Ascending aorta (tissue), 2 donors: ENCODE measurements at regions of chr3 and their contacts with region 1.

Region 1: GRCh38 chr3:123449102-123449996 is 459 bp upstream of the ADCY5 start:
- DNase-seq: no peak
- H3K4me3 ChIP-seq: peak overlapping the region; percentile 74 to 97
- H3K27ac ChIP-seq: peak overlapping the region; percentile 88 to 96
- H3K4me1 ChIP-seq: peaks cover 0 to 10% of the 10 kb centered on the region in 2 donors
- H3K27me3 ChIP-seq: peaks cover 4% of the 10 kb centered on the region
- CTCF ChIP-seq: no peak

Region 2: DNA sequence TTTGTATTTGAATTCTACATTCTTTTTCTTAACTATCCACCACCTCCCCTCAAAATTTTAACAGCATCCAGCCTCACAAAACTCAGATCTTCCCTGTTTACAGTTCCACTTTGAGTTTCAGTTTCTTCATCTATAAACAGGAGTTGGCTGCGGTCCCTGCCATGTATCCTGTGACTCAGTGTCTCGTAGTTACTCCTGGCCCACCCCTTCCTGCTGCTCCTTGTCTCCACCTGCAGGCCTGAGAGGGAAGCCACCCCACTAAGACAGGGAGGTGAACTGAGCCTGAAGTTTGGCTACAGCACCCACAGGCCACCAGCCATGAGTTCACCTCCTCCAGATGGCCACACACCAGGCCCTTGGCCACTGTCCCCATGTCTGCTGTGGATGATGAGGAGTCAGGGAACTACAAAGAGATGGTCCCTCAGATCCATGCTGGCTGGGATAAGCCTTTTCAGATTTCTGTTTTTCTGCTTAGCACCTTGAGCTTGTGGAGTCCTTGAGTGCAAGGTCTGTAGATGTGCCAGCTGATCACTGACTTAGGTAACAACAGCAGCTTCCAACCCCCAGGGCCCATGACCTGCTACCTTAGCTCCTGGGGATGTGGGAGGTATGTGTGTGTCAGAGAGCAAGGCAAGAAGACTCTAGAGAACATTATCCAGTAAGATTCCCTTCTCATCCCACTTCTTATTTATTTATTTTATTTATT is 1356.7 kb before region 1 on chr3:
- intact Hi-C with region 1: no loop called
- DNase-seq: no peak
- H3K4me3 ChIP-seq: no peak overlapping the region
- H3K27ac ChIP-seq: no peak overlapping the region
- H3K4me1 ChIP-seq: no peaks in the 10 kb centered on the region
- H3K27me3 ChIP-seq: no peaks in the 10 kb centered on the region
- CTCF ChIP-seq: peak in 1 of 3 experiments; percentile 23

Region 3: GRCh38 chr3:123328851-123329635 is 120.3 kb before region 1 on chr3:
- intact Hi-C with region 1: loop called (anchors 1 kb)
- DNase-seq: peak in 1 of 2 donors; percentile 88
- H3K4me3 ChIP-seq: no peak overlapping the region
- H3K27ac ChIP-seq: peak overlapping the region; percentile 86
- H3K4me1 ChIP-seq: peaks cover 14 to 66% of the 10 kb centered on the region in 2 donors
- H3K27me3 ChIP-seq: no peaks in the 10 kb centered on the region
- CTCF ChIP-seq: peak; percentile 93 to 96 (median 96)

Region 4: DNA sequence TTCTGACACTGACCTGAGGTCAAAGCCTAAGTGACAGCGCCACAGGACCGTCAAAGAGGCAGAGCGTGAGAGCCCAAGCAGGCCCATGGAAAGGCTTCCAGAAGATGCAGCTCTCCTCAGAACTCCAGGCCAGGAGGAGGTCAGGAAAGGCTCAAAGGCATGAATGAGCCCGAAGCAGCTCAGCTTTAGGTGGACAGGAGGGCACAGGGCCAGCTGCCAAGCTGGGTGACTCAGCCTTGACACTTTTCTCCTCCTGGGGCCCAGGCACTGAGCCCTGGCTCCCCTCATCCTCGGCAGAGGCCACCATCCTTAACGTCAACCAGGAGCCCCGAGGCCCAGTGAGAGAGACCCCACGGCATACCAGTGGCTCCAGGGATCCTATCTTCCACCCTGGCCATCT is 63.4 kb before region 1 on chr3:
- intact Hi-C with region 1: loop called (anchors 5 kb)
- DNase-seq: peak in 1 of 2 donors; percentile 79
- H3K4me3 ChIP-seq: peak overlapping the region in 1 of 2 donors; percentile 12
- H3K27ac ChIP-seq: peak overlapping the region; percentile 90 to 93
- H3K4me1 ChIP-seq: peaks cover 16 to 65% of the 10 kb centered on the region in 2 donors
- H3K27me3 ChIP-seq: no peaks in the 10 kb centered on the region
- CTCF ChIP-seq: no peak

Region 5: GRCh38 chr3:123431658-123432324 is 17.6 kb before region 1 on chr3:
- intact Hi-C with region 1: loop called (anchors 2 kb)
- DNase-seq: no peak
- H3K4me3 ChIP-seq: no peak overlapping the region
- H3K27ac ChIP-seq: peak overlapping the region; percentile 79 to 86
- H3K4me1 ChIP-seq: peaks cover 11 to 34% of the 10 kb centered on the region in 2 donors
- H3K27me3 ChIP-seq: no peaks in the 10 kb centered on the region
- CTCF ChIP-seq: no peak

Region 6: GRCh38 chr3:123559040-123559861 is 109.9 kb after region 1 on chr3:
- intact Hi-C with region 1: loop called (anchors 2 kb)
- DNase-seq: no peak
- H3K4me3 ChIP-seq: no peak overlapping the region
- H3K27ac ChIP-seq: no peak overlapping the region
- H3K4me1 ChIP-seq: no peaks in the 10 kb centered on the region
- H3K27me3 ChIP-seq: no peaks in the 10 kb centered on the region
- CTCF ChIP-seq: peak; percentile 66 to 81 (median 80)